ENCODE measurements at regions of chr15 and their contacts with region 1.

Region 1: GRCh38 chr15:68335251-68335650 is 57.7 kb downstream of the FEM1B start:
- DNase-seq: no peak
- ATAC-seq: peak; percentile 13 to 71 (median 56)
- H3K4me3 ChIP-seq: no peak overlapping the region
- H3K27ac ChIP-seq: peak overlapping the region; percentile 18 to 74 (median 50)
- H3K4me1 ChIP-seq: peaks cover 5 to 27% (median 21%) of the 10 kb centered on the region in 9 donors
- H3K27me3 ChIP-seq: no peaks in the 10 kb centered on the region
- CTCF ChIP-seq: no peak

Region 2: DNA sequence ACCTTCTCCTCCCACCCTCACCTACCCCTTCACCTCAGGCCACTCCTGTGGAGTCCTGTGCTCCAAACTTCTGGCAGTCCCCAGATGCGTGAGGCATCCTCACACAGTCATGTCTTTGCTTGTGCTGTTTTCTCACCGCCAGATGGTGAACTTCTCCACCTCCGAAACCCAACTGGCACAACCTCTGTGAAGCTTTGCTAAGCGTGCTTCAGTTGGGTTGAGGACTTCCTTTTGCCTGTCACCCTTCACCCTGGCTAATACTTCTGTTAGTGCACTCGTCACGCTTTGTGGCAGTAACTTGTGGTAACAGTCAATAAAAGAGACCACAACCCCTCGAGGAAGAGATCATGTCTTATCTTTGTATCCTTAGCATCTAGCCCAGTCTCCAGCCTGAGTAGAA is 551.9 kb before region 1 on chr15:
- intact Hi-C with region 1: no loop called
- DNase-seq: no peak
- ATAC-seq: no peak
- H3K4me3 ChIP-seq: no peak overlapping the region
- H3K27ac ChIP-seq: no peak overlapping the region
- H3K4me1 ChIP-seq: peaks cover 0 to 16% (median 0%) of the 10 kb centered on the region in 9 donors
- H3K27me3 ChIP-seq: no peaks in the 10 kb centered on the region
- CTCF ChIP-seq: no peak

Region 3: DNA sequence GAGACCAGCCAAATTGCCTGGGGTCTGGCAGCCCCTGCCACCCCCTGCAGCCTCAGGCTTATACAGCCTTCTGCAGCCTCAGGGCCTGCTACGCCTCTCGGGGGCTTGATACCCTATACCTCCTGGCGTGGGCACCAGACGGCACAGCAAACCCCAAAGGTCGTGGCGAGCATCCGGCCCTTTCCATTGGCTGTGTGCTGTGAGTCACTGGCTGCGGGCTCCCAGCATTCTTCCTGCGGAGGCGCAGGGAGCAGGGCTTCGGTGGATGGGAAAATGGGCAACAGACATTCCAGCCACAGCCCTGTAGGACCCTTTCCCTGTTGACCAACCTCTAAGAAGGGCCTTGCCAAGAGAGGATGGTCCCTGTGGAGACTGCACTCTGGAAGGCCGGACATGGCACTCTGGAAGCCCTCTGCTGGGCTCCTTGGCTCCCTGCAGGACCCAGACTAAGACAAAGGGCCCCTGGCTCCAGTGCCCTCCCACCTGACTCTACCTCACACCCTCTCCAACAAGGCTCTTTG is 37.1 kb after region 1 on chr15:
- intact Hi-C with region 1: loop called in 1 of 10 experiments (anchors 2 kb)
- DNase-seq: peak in 1 of 2 donors; percentile 26
- ATAC-seq: peak; percentile 30 to 61 (median 58)
- H3K4me3 ChIP-seq: no peak overlapping the region
- H3K27ac ChIP-seq: no peak overlapping the region
- H3K4me1 ChIP-seq: peaks cover 10 to 46% (median 28%) of the 10 kb centered on the region in 9 donors
- H3K27me3 ChIP-seq: no peaks in the 10 kb centered on the region
- CTCF ChIP-seq: peak in 8 of 9 donors; percentile 35 to 66 (median 56)